ENCODE measurements at regions of chr3 and their contacts with region 1.

Region 1: DNA sequence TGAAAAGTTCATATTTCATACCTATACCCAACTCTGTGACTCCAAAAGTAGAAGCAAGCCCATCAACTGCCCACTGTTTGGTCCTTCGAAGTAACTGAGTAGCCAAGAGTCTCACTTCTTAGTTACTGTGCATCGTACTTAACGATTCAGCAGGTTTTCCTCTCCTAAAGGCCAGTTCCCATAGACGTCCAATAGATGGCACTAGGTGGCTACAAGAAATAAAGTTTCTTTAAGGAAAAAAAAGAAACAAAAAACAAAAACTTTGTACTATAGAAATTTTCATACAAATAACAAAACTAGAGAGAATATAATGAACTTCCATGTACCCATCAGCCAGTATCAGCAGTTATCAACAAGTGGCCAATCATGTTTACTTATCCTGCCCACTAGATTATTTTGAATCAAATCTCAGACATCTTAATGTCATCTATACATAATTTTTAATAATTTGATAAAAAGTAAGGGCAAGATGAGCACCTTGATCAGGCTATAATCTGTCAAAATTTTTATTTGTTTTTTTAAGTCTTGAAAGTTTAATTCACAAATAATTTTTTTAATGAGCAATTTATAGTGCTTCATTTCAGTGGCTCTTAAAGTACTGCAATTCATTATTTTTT is 63.8 kb upstream of the ACP3 start:
- DNase-seq: no peak
- ATAC-seq: peak; percentile 61 to 62
- H3K4me3 ChIP-seq: no peak overlapping the region
- H3K27ac ChIP-seq: no peak overlapping the region
- H3K4me1 ChIP-seq: no peaks in the 10 kb centered on the region
- H3K27me3 ChIP-seq: no peaks in the 10 kb centered on the region

Region 2: GRCh38 chr3:132134611-132135010 is 118.8 kb before region 1 on chr3:
- intact Hi-C with region 1: no loop called
- DNase-seq: no peak
- ATAC-seq: no peak
- H3K4me3 ChIP-seq: no peak overlapping the region
- H3K27ac ChIP-seq: no peak overlapping the region
- H3K4me1 ChIP-seq: no peaks in the 10 kb centered on the region
- H3K27me3 ChIP-seq: no peaks in the 10 kb centered on the region

Region 3: DNA sequence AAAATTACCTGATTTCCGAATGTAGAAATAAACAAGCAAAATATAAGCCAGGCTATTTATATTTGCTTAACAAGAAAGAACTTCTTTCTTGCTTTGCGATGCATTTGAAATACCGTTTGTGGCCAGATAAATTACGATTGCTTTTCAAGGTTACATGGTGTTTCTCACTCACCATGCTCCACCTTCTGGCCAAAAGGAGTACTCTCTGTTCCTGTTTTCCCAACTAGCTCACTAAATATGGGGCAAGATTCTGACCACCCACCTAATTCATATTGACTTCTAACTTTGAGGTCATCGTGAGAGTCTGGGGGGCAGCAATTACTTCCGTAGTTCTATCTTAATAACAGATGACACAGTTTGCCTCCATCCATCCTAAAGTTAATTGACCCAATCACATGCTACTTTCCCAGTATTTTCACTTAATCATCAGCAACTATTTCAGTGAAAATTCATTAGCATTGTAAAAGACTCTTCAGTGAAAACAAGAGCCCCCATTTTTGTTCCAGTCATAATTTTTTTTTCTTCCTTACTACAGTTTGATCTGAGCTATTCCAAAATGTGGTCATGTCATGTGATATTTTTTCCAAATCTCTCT is 89.7 kb after region 1 on chr3:
- intact Hi-C with region 1: loop called (anchors 2 to 5 kb)
- DNase-seq: no peak
- ATAC-seq: peak; percentile 74 to 77
- H3K4me3 ChIP-seq: peak overlapping the region; percentile 32
- H3K27ac ChIP-seq: no peak overlapping the region
- H3K4me1 ChIP-seq: no peaks in the 10 kb centered on the region
- H3K27me3 ChIP-seq: no peaks in the 10 kb centered on the region

Region 4: DNA sequence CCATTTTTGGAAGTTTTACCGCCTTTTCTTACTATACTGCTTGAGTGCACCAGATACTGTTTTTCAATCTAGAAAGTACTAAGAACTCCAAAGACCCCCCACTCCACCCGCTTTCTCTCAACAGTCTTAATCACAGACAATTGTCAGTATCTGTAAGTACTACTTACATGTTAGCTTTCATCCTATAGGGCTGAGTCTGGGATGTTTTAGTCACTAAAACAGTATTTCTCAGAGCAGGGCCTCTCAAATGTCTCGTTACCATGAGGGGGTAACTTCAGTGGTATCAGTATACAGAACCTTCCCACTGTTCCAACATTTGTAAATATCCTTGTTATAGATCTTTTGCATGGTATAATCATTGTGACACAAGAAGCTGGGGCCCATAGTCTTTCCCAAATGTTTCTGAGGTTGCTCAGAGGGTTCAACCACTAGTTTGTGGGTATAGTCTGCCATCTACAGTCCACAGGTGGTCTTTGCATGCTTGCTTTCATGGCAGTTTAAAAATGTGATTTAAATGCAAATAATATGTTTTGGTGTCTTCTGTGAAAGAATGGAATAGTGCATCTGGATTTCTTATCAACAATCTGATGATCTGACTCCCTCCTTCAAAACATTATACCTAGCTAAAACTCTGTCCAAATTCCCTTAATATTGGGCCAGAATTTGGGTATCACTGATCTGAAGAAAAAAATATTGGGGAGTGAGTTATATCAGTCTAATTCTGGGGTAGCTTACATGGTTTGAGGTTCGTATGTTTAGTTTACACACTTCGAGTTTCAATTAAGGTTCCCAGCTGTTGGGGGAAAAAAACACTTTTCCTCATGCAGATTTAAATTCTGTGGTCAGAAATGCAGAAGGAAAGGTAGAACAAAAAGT is 145.9 kb after region 1 on chr3:
- intact Hi-C with region 1: loop called in 1 of 4 experiments (anchors 5 kb)
- DNase-seq: no peak
- ATAC-seq: peak; percentile 55 to 75
- H3K4me3 ChIP-seq: no peak overlapping the region
- H3K27ac ChIP-seq: no peak overlapping the region
- H3K4me1 ChIP-seq: no peaks in the 10 kb centered on the region
- H3K27me3 ChIP-seq: no peaks in the 10 kb centered on the region

Region 5: GRCh38 chr3:132629928-132630327 is 376.6 kb after region 1 on chr3:
- intact Hi-C with region 1: no loop called
- DNase-seq: no peak
- ATAC-seq: no peak
- H3K4me3 ChIP-seq: no peak overlapping the region
- H3K27ac ChIP-seq: no peak overlapping the region
- H3K4me1 ChIP-seq: no peaks in the 10 kb centered on the region
- H3K27me3 ChIP-seq: no peaks in the 10 kb centered on the region

Measured in right cardiac atrium (tissue), 5 donors.